AG04449 (cell line): ENCODE measurements at regions of chr16 and their contacts with region 1.

Region 1: GRCh38 chr16:11105038-11105903 is 150.7 kb downstream of the SOCS1 start:
- DNase-seq: peak; percentile 79
- H3K4me3 ChIP-seq: no peak overlapping the region
- CTCF ChIP-seq: no peak

Region 2: DNA sequence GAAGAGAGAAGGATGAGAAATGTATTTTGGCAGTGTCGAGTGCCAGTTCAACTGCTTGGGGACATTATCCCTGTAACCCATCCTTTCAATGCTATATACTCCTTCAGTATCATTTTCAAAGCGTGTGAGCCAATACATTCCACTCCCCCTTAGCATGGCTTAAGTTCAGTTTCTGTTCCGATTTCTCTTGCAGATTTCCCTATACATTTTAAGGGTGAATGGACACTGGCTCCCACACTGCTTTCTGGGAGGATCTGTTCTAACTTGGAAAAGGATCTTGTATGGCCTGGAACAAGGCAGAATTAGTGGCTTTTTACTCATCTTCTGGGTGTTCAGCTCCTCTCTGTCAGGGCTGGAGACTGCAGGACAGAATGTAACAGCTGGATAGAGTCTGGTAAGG is 1680.0 kb before region 1 on chr16:
- CTCF ChIA-PET with region 1: no interaction called
- POLR2A ChIA-PET with region 1: no interaction called
- DNase-seq: no peak
- H3K4me3 ChIP-seq: no peak overlapping the region
- CTCF ChIP-seq: no peak

Region 3: DNA sequence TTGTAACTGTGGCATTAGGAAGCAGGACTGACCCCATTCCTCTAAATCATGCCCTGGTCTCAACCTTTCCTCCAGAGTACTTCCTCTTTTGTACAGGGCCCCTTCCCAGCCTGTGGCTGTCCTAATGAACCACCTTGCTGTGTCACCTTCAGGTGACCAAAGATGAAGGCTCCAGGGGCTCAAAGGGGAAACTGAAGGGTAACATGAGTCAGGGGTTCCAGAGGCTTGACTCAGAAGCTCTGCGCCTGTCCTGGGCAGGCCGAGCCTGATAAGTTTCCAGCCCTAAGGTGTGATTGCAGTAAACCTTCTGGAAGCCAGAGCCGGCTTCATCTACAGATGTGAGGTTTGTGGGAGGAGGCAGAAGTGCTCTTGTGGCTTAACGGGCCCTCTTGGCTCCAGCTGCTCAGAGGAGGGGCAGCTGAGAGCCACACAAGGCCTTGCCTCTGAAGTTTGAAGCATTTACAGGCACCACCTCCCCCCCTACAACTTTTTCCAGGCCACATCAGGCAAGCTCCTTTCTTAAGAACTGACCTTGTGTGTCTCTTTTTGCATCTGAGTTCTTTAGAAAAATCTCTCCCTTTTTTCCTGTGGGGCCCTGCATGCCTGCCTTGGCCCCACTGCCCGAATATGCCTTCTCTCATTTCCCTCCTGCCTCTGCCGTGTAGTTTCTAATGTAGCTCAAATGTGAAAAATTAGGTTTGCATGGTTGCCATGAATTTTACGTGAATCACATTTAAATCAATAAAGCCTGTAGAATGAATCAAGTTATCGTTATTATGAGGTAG is 11.0 kb before region 1 on chr16:
- CTCF ChIA-PET with region 1: interaction called, 11 read pairs
- POLR2A ChIA-PET with region 1: no interaction called
- DNase-seq: no peak
- H3K4me3 ChIP-seq: no peak overlapping the region
- CTCF ChIP-seq: no peak